Motor neuron (in vitro differentiated cells): ENCODE measurements at regions of chr17 and their contacts with region 1.

Region 1: DNA sequence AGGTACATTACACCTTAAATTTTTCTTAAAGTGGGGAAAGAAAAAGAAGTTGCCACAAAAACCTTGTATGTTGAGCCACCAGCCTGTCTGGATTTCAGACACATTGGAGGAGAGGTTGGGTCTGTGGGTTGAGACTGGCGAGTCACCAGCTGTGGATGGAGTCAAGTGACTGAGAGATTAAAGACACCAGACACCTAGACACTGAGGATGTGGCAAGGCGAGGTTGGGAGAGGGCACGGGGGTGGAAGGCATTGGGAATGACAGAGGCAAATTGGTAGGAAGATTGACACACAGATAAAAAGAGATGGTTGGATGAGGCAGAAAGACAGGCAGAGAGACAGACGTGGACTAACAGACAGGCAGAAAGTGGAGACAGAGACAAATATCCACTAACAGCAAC is 49.6 kb downstream of the KCNJ12 start:
- ATAC-seq: no peak
- H3K4me3 ChIP-seq: no peak overlapping the region
- H3K27ac ChIP-seq: no peak overlapping the region
- H3K4me1 ChIP-seq: no peaks in the 10 kb centered on the region

Region 2: GRCh38 chr17:21252796-21253645 is 172.7 kb before region 1 on chr17 and contains the start of gene NATD1:
- in situ Hi-C with region 1: loop called in 1 of 9 experiments (anchors 25 kb)
- ATAC-seq: peak; percentile 58 to 84 (median 82)
- H3K4me3 ChIP-seq: peak within 1 kb of the TSS; percentile 44 to 75 (median 59)
- H3K27ac ChIP-seq: peak within 1 kb of the TSS in 1 of 2 donors; percentile 38
- H3K4me1 ChIP-seq: peaks cover 0 to 13% of the 10 kb centered on the region in 2 donors
- total RNA-seq, gene NATD1: 3.6 to 10.8 (median 4.9) TPM

Region 3: DNA sequence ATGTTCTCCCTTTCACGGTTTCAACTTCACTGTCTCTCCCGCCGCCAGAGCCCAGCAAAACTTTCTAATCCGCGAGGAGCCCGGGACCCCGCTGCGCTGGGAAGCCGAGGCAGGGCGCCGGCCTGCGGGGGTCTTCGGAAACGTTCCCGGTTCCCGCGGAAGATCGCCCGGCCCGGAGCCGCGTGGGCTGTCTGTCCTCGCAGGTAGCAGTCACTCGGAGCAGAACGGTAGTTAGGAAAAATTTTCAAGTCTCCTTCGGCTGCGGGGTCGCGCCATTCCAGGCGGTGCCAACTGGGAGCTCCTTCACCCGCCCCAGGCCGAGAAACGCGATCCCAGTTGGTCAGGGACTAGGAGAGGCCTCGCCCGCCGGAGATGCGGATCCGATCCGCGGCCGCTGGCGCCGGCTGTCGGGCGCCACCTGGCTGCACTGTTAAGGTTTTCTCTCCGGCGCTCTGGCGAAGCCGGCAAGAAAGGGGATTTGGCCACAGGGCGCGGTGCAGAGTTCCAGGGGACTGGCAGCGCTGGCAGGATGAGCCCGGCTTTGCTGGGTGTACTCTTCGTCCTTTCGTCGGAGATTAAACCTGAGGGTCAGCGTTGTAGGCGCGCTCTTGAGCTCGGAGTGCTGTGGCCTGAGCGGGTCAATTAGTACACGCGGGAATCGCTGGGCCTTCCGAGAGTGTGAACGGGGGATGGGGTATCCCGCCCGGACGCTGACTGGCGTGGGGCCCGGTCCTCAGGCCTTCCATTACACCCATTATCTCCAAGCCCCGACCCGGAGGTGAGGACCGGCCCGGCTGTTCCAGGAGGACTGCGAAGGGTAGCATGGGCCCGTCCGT is 85.8 kb after region 1 on chr17:
- in situ Hi-C with region 1: no loop called
- ATAC-seq: peak; percentile 92 to 97 (median 96)
- H3K4me3 ChIP-seq: peak overlapping the region; percentile 32 to 40 (median 36)
- H3K27ac ChIP-seq: no peak overlapping the region
- H3K4me1 ChIP-seq: peaks cover 7 to 9% of the 10 kb centered on the region in 2 donors